Transverse colon (tissue), 4 donors: ENCODE measurements at regions of chr6 and their contacts with region 1.

Region 1: GRCh38 chr6:167907837-167908681 is 81.3 kb downstream of the AFDN start:
- DNase-seq: peak; percentile 38
- H3K4me3 ChIP-seq: no peak overlapping the region
- H3K27ac ChIP-seq: peak overlapping the region in 3 of 4 donors; percentile 35 to 75 (median 65)
- H3K4me1 ChIP-seq: peaks cover 0 to 19% (median 5%) of the 10 kb centered on the region in 4 donors
- H3K27me3 ChIP-seq: no peaks in the 10 kb centered on the region
- CTCF ChIP-seq: peak; percentile 19 to 67 (median 58)
- EP300 ChIP-seq: no peak
- POLR2A ChIP-seq: no peak

Region 2: DNA sequence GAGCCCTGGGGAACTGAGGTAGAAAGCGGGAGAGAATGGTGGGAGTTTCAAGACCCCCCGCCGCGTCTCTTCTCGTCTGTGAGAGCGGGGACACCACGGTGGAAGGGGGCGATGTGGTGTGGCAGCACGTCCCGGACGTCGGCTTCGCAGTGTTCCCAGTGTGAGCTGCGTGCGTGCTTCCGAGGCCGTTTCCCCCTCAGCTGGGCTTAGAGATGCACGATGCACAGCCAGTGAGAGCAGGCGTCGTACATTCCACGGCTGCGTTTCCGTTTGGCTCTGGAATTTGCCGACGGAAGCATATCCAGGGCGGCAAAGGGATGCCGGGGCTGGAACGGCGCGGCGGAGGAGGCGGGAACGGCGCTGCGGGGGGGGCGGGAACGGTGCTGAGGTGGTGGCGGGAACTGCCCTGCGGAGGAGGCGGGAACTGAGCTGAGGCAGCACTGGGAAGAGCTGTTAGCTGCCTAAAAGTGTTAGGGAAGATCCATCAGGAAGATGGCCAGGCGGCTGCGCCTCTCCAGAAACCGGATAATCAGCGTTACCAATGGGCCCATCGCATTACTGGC is 127.1 kb after region 1 on chr6:
- in situ Hi-C with region 1: loop called in 2 of 4 experiments (anchors 25 kb)
- intact Hi-C with region 1: no loop called
- DNase-seq: peak; percentile 59
- H3K4me3 ChIP-seq: peak overlapping the region; percentile 17 to 48 (median 24)
- H3K27ac ChIP-seq: peak overlapping the region; percentile 66 to 75 (median 74)
- H3K4me1 ChIP-seq: peaks cover 0 to 14% (median 0%) of the 10 kb centered on the region in 4 donors
- H3K27me3 ChIP-seq: no peaks in the 10 kb centered on the region
- CTCF ChIP-seq: no peak
- EP300 ChIP-seq: no peak
- POLR2A ChIP-seq: no peak